Activated CD4-positive, alpha-beta T cell treated with anti-CD3 and anti-CD28 coated beads for 36 hours (primary cell): ENCODE measurements at regions of chr12 and their contacts with region 1.

Region 1: GRCh38 chr12:98803468-98804209 is 158.5 kb downstream of the APAF1 start:
- DNase-seq: no peak
- ATAC-seq: no peak
- H3K4me3 Mint-ChIP-seq: no peak overlapping the region
- H3K27ac Mint-ChIP-seq: no peak overlapping the region
- H3K4me1 Mint-ChIP-seq: no peaks in the 10 kb centered on the region
- H3K27me3 Mint-ChIP-seq: peaks cover 18% of the 10 kb centered on the region

Region 2: DNA sequence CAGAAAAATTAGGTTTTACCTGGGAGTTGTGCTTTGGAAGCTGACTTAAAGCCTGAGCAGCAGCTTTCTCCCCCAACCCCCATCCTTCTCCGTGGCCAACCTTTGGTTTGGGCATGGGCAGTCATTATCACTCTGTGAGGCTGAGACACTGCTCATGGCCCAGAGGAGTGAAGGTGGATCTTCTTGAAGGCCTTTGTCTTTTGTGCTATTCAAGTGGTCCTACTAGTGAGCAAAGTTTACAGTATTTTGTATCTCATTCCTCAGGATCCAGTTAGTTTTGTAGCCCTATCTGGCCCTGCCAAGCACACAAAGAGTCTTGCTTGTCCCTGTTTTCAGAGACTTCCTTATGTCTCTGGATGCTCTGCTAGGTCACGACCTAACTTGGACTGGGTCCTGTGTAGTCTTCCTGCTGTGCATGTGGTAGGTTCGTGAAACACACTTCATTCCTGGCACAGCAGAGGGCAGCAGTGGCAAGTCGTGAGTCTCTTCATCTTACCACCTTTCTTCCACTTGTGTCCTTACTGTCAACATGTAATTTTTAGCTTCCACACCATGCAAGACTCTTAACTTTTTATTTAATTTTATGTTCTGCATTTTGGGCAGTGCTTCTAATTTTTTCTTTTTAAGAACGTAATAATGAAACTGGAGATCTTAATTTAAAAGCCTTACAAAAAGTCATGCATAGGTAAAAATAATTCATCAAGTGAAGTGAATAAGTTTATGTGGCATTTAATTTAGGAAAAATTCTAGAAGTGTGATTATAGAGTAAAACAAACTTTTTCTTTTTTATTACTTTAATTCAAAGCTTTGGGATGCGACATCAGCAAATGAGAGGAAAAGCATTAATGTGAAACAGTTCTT is 104.8 kb before region 1 on chr12:
- CTCF ChIA-PET with region 1: no interaction called
- POLR2A ChIA-PET with region 1: no interaction called
- intact Hi-C with region 1: loop called in 1 of 2 experiments (anchors 5 kb)
- DNase-seq: peak; percentile 74
- ATAC-seq: peak; percentile 94
- H3K4me3 Mint-ChIP-seq: no peak overlapping the region
- H3K27ac Mint-ChIP-seq: no peak overlapping the region
- H3K4me1 Mint-ChIP-seq: peaks cover 6% of the 10 kb centered on the region
- H3K27me3 Mint-ChIP-seq: no peaks in the 10 kb centered on the region

Region 3: GRCh38 chr12:98725476-98726247 is 78.0 kb before region 1 on chr12:
- CTCF ChIA-PET with region 1: interaction called, 4 read pairs
- POLR2A ChIA-PET with region 1: no interaction called
- intact Hi-C with region 1: loop called in 1 of 2 experiments (anchors 2 kb)
- DNase-seq: peak; percentile 83
- ATAC-seq: peak; percentile 89
- H3K4me3 Mint-ChIP-seq: no peak overlapping the region
- H3K27ac Mint-ChIP-seq: no peak overlapping the region
- H3K4me1 Mint-ChIP-seq: peaks cover 11% of the 10 kb centered on the region
- H3K27me3 Mint-ChIP-seq: no peaks in the 10 kb centered on the region

Region 4: DNA sequence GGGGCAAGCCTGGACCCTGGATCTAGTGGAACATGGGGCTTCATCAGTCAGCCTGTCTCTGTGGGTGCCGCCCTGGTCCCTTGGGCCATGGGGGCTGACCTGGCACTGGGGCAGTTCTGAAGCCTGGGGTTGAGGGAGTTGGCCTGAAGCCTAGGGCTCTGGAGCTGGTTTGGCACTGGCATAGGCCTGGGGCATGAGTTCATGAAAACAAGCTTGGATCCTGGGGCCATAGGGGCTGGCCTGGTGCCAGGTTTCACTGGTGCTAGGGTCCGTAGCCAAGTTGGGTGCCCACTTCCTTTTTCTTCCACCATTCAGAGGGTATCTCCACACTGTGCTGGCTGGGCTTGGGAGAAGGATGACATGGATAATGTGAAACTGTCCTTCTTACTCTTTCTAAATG is 1964.3 kb after region 1 on chr12:
- CTCF ChIA-PET with region 1: no interaction called
- POLR2A ChIA-PET with region 1: no interaction called
- intact Hi-C with region 1: no loop called
- DNase-seq: no peak
- ATAC-seq: no peak
- H3K4me3 Mint-ChIP-seq: no peak overlapping the region
- H3K27ac Mint-ChIP-seq: no peak overlapping the region
- H3K4me1 Mint-ChIP-seq: no peaks in the 10 kb centered on the region
- H3K27me3 Mint-ChIP-seq: no peaks in the 10 kb centered on the region